ENCODE measurements at regions of chr22 and their contacts with region 1.

Region 1: GRCh38 chr22:28907311-28908008 is 24.1 kb downstream of the ZNRF3 start:
- DNase-seq: peak; percentile 89
- H3K4me3 Mint-ChIP-seq: no peak overlapping the region
- H3K27ac Mint-ChIP-seq: peak overlapping the region; percentile 70
- H3K4me1 Mint-ChIP-seq: peaks cover 34% of the 10 kb centered on the region
- H3K27me3 Mint-ChIP-seq: peaks cover 44% of the 10 kb centered on the region

Region 2: DNA sequence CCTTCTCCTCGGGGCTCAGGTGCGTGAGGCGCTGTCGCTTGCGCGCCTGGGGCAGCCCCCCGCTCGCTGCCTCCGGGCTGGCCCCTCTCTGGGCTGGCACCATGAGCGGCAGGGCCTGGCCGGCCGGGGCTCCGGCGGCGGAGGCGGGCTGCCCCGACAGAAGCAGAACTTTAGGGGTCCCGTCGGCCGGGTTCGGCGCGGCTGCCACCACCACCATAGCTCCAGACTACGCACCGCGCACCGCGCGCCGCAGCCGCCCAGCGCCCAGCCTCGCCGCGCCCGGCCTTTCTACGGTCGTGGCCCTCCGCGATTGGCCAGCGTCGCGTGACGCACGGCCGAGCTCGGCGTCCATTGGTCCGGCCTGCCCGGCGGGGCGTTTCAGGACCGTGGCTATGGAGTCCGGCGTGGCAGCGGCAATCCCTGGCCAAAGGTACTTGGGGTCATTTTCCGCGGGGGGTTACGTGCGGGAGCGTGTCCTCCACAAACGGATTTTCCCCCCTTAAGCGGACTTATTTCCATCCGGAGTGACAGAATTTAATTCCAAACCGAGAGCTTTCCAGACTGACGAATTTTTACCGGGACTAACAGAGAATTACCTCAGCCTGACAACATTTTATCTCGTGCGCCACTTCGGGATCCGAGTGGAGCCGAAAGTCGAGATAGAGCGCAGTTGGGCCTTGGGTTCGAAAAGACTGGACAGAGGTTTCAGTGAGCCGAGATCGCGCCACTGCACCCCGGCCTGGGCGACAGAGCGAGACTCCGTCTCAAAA is 107.0 kb before region 1 on chr22 and contains the start of gene XBP1:
- CTCF ChIA-PET with region 1: no interaction called
- POLR2A ChIA-PET with region 1: interaction called, 6 read pairs
- intact Hi-C with region 1: loop called (anchors 1 kb)
- DNase-seq: peak; percentile 92
- H3K4me3 Mint-ChIP-seq: peak within 1 kb of the TSS; percentile 94
- H3K27ac Mint-ChIP-seq: peak within 1 kb of the TSS; percentile 96
- H3K4me1 Mint-ChIP-seq: peaks cover 46% of the 10 kb centered on the region
- H3K27me3 Mint-ChIP-seq: no peaks in the 10 kb centered on the region
- total RNA-seq, gene XBP1: 128 to 132 TPM

Region 3: GRCh38 chr22:28882878-28883656 is 24.4 kb before region 1 on chr22 and contains the start of gene ZNRF3:
- CTCF ChIA-PET with region 1: no interaction called
- POLR2A ChIA-PET with region 1: no interaction called
- intact Hi-C with region 1: loop called (anchors 1 kb)
- DNase-seq: peak; percentile 93
- H3K4me3 Mint-ChIP-seq: peak within 1 kb of the TSS; percentile 78
- H3K27ac Mint-ChIP-seq: no peak within 1 kb of the TSS
- H3K4me1 Mint-ChIP-seq: peaks cover 15% of the 10 kb centered on the region
- H3K27me3 Mint-ChIP-seq: peaks cover 22% of the 10 kb centered on the region
- total RNA-seq, gene ZNRF3: 1.3 to 1.5 TPM

Region 4: GRCh38 chr22:28955817-28956216 is 48.4 kb after region 1 on chr22:
- CTCF ChIA-PET with region 1: no interaction called
- POLR2A ChIA-PET with region 1: interaction called, 4 read pairs
- intact Hi-C with region 1: loop called (anchors 1 kb)
- DNase-seq: peak; percentile 92
- H3K4me3 Mint-ChIP-seq: peak overlapping the region; percentile 54
- H3K27ac Mint-ChIP-seq: peak overlapping the region; percentile 70
- H3K4me1 Mint-ChIP-seq: peaks cover 21% of the 10 kb centered on the region
- H3K27me3 Mint-ChIP-seq: peaks cover 80% of the 10 kb centered on the region

Region 5: GRCh38 chr22:29128891-29129807 is 221.7 kb after region 1 on chr22:
- CTCF ChIA-PET with region 1: no interaction called
- POLR2A ChIA-PET with region 1: no interaction called
- intact Hi-C with region 1: no loop called
- DNase-seq: no peak
- H3K4me3 Mint-ChIP-seq: no peak overlapping the region
- H3K27ac Mint-ChIP-seq: no peak overlapping the region
- H3K4me1 Mint-ChIP-seq: no peaks in the 10 kb centered on the region
- H3K27me3 Mint-ChIP-seq: peaks cover 3% of the 10 kb centered on the region

Region 6: GRCh38 chr22:29167032-29167911 is 259.8 kb after region 1 on chr22:
- CTCF ChIA-PET with region 1: no interaction called
- POLR2A ChIA-PET with region 1: no interaction called
- intact Hi-C with region 1: loop called (anchors 5 kb)
- DNase-seq: peak; percentile 87
- H3K4me3 Mint-ChIP-seq: peak overlapping the region; percentile 32
- H3K27ac Mint-ChIP-seq: peak overlapping the region; percentile 54
- H3K4me1 Mint-ChIP-seq: peaks cover 19% of the 10 kb centered on the region
- H3K27me3 Mint-ChIP-seq: peaks cover 6% of the 10 kb centered on the region